Upper lobe of right lung (tissue), 1 donor: ENCODE measurements at regions of chr12 and their contacts with region 1.

Region 1: DNA sequence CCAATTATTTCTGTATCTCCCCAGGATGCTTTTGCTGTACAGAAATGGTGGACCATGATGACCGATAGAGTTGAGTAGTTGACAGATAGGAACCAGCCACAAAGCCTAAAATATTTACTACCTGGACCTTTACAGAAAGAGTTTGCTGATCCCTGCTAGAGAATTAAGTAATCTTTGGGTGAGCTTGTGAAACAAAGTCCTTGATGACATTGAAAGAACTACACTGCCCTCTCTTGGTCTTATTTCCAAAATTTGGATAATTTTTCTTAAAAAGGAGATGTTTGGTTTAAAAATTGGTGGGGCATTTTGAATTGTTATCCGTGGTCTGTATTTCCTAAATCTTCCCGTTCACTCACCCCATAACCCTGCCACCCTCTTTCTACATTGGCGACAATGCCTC is 13.7 kb upstream of the TCTN1 start:
- DNase-seq: no peak
- ATAC-seq: peak; percentile 73
- H3K4me3 ChIP-seq: no peak overlapping the region
- H3K27ac ChIP-seq: no peak overlapping the region
- H3K4me1 ChIP-seq: no peaks in the 10 kb centered on the region
- H3K27me3 ChIP-seq: no peaks in the 10 kb centered on the region
- CTCF ChIP-seq: peak; percentile 48

Region 2: GRCh38 chr12:110513842-110514241 is 86.4 kb before region 1 on chr12:
- intact Hi-C with region 1: loop called (anchors 5 kb)
- DNase-seq: no peak
- ATAC-seq: no peak
- H3K4me3 ChIP-seq: no peak overlapping the region
- H3K27ac ChIP-seq: no peak overlapping the region
- H3K4me1 ChIP-seq: no peaks in the 10 kb centered on the region
- H3K27me3 ChIP-seq: no peaks in the 10 kb centered on the region
- CTCF ChIP-seq: no peak